CD4-positive, alpha-beta T cell (primary cell): ENCODE measurements at regions of chr2 and their contacts with region 1.

Region 1: DNA sequence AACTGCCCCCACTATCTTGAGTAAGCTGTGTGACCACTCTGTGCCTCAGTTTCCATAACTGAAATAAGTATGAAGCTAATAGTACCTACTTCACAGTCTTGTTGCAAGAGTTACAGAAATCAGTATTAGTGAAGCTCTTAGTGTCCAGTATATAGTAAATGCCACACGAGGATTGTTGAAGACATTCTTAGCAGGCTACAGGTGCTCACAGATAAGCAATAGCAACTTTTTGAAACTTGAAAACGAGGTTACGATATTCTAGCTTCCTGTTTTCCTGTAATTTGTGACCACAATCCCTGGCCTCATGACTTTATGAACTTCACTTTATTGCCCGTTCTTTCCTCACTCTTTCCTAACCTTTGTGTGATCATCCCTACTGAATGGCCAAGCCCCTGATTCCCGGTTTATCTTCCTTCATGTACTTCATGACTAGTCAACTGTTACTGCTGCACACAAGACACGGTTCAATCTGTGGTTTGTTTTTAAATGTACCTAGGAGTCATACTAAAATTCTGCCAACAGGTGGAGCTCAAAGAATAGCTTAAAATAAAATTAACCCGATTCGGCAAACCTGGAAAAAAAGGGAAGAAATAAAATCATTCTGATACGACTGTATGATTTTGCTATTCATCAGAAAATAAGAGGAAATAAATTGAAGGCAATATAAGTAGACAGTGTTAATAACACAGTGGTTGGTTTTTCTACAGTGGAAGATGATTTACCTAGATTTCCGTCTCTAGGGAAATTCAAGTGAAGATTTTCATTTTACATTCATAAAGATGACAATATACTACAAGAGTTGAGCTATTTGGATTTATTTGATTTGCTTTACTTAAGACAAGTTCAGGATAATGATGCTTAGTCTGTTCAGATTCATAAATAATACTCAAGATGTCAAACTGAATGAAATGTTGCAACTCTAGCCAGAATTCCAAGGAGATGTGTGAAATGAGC is 38.1 kb upstream of the STAT1 start:
- DNase-seq: peak in 4 of 14 experiments; percentile 37 to 78 (median 76)
- ATAC-seq: peak; percentile 75
- H3K4me3 ChIP-seq: no peak overlapping the region
- H3K4me3 Mint-ChIP-seq: no peak overlapping the region
- H3K27ac ChIP-seq: no peak overlapping the region
- H3K27ac Mint-ChIP-seq: no peak overlapping the region
- H3K4me1 ChIP-seq: peaks cover 16% of the 10 kb centered on the region
- H3K4me1 Mint-ChIP-seq: peaks cover 22% of the 10 kb centered on the region
- H3K27me3 ChIP-seq: no peaks in the 10 kb centered on the region
- H3K27me3 Mint-ChIP-seq: no peaks in the 10 kb centered on the region
- CTCF ChIP-seq: peak; percentile 92

Region 2: GRCh38 chr2:191038241-191038725 is 13.8 kb before region 1 on chr2:
- CTCF ChIA-PET with region 1: interaction called, 14 read pairs
- POLR2A ChIA-PET with region 1: no interaction called
- intact Hi-C with region 1: no loop called
- DNase-seq: peak in 8 of 14 experiments; percentile 12 to 77 (median 36)
- ATAC-seq: peak; percentile 68
- H3K4me3 ChIP-seq: no peak overlapping the region
- H3K4me3 Mint-ChIP-seq: peak overlapping the region; percentile 3
- H3K27ac ChIP-seq: peak overlapping the region in 1 of 2 donors; percentile 59
- H3K27ac Mint-ChIP-seq: peak overlapping the region; percentile 80
- H3K4me1 ChIP-seq: peaks cover 27% of the 10 kb centered on the region
- H3K4me1 Mint-ChIP-seq: peaks cover 18% of the 10 kb centered on the region
- H3K27me3 ChIP-seq: no peaks in the 10 kb centered on the region
- H3K27me3 Mint-ChIP-seq: no peaks in the 10 kb centered on the region
- CTCF ChIP-seq: no peak

Region 3: GRCh38 chr2:191066197-191066918 is 14.3 kb after region 1 on chr2:
- CTCF ChIA-PET with region 1: interaction called, 18 read pairs
- POLR2A ChIA-PET with region 1: interaction called, 23 read pairs
- intact Hi-C with region 1: no loop called
- DNase-seq: peak in 2 of 14 experiments; percentile 25 to 49
- ATAC-seq: peak; percentile 30
- H3K4me3 ChIP-seq: peak overlapping the region; percentile 3
- H3K4me3 Mint-ChIP-seq: peak overlapping the region; percentile 73
- H3K27ac ChIP-seq: peak overlapping the region; percentile 14 to 42
- H3K27ac Mint-ChIP-seq: peak overlapping the region; percentile 85
- H3K4me1 ChIP-seq: peaks cover 26% of the 10 kb centered on the region
- H3K4me1 Mint-ChIP-seq: peaks cover 81% of the 10 kb centered on the region
- H3K27me3 ChIP-seq: no peaks in the 10 kb centered on the region
- H3K27me3 Mint-ChIP-seq: no peaks in the 10 kb centered on the region
- CTCF ChIP-seq: no peak

Region 4: DNA sequence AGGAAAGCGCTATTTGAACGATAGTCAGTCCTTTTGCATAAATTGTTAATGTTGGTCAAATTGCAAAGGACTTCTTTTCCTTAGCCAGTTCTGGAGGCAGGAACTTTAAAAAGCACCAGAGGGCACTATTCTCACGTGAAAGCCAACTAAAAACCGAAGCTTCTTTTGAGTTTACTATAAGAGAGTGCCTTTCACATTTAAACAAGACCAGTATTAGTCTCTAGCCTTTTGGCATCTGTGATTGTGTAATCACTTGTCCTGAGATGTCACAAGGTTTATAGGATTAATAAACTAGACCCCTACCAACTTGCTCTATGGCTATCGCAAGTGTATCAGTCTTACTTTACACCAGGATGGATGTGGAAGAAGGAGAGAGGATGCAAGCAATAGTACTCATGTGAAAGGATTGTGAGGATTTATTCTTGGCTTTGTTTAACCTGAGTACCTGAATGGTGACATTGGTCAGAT is 113.1 kb after region 1 on chr2:
- CTCF ChIA-PET with region 1: interaction called, 12 read pairs
- POLR2A ChIA-PET with region 1: interaction called, 4 read pairs
- intact Hi-C with region 1: no loop called
- DNase-seq: peak in 6 of 14 experiments; percentile 18 to 73 (median 52)
- ATAC-seq: peak; percentile 75
- H3K4me3 ChIP-seq: no peak overlapping the region
- H3K4me3 Mint-ChIP-seq: no peak overlapping the region
- H3K27ac ChIP-seq: no peak overlapping the region
- H3K27ac Mint-ChIP-seq: no peak overlapping the region
- H3K4me1 ChIP-seq: no peaks in the 10 kb centered on the region
- H3K4me1 Mint-ChIP-seq: peaks cover 6% of the 10 kb centered on the region
- H3K27me3 ChIP-seq: no peaks in the 10 kb centered on the region
- H3K27me3 Mint-ChIP-seq: no peaks in the 10 kb centered on the region
- CTCF ChIP-seq: peak; percentile 85

Region 5: GRCh38 chr2:191521608-191522208 is 469.6 kb after region 1 on chr2:
- CTCF ChIA-PET with region 1: interaction called, 4 read pairs
- POLR2A ChIA-PET with region 1: interaction called, 5 read pairs
- intact Hi-C with region 1: loop called (anchors 1 to 2 kb)
- DNase-seq: peak in 3 of 14 experiments; percentile 36 to 42 (median 36)
- ATAC-seq: peak; percentile 49
- H3K4me3 ChIP-seq: no peak overlapping the region
- H3K4me3 Mint-ChIP-seq: no peak overlapping the region
- H3K27ac ChIP-seq: no peak overlapping the region
- H3K27ac Mint-ChIP-seq: no peak overlapping the region
- H3K4me1 ChIP-seq: no peaks in the 10 kb centered on the region
- H3K4me1 Mint-ChIP-seq: no peaks in the 10 kb centered on the region
- H3K27me3 ChIP-seq: no peaks in the 10 kb centered on the region
- H3K27me3 Mint-ChIP-seq: no peaks in the 10 kb centered on the region
- CTCF ChIP-seq: peak; percentile 86